WTC11 (cell line): ENCODE measurements at regions of chr17 and their contacts with region 1.

Region 1: GRCh38 chr17:19567216-19568015 is 33.8 kb downstream of the SLC47A1 start:
- DNase-seq: peak; percentile 21
- ATAC-seq: peak; percentile 82
- H3K4me3 Mint-ChIP-seq: no peak overlapping the region
- H3K27ac Mint-ChIP-seq: no peak overlapping the region
- H3K4me1 Mint-ChIP-seq: no peaks in the 10 kb centered on the region
- H3K27me3 Mint-ChIP-seq: no peaks in the 10 kb centered on the region; the same call in 1 of the 2 replicates
- CTCF ChIP-seq: no peak; the same call in 1 of the 2 replicates

Region 2: DNA sequence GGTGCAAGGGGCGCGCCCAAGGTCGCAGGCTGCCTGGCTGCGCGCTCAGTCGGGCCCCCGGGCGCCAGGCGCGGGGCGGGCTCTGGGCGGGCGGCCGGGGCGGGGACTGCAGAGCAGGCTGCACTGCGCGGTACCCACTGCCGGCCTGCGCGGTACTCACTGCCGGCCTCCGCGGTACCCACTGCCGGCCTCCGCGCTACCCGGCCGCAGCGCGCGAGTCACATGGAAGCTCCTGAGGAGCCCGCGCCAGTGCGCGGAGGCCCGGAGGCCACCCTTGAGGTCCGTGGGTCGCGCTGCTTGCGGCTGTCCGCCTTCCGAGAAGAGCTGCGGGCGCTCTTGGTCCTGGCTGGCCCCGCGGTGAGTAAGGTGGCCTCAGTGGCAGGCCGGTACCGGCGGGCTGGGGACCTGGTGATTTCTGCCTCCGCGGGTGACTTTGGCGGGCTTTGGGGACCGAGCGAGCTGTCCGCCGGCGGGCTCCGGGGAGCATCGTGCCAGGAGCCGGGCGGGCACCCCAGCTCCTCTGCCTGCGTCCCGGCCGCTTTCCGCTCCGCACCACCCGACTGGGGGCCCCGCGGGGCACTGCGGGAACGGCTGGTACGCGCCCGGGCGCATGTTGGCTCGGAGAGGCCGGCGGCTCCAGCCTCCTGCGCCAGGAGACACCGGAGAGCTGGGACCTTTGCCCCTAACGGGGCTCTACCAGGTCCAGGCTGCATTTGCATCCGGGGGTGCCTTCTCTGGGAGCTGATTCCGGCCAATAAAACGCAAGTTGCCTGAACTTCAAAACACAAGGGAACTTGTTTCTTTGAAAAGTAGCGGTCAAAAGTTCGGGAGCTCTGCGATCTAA is 33.5 kb before region 1 on chr17 and contains the start of gene SLC47A1:
- CTCF ChIA-PET with region 1: interaction called, 10 read pairs
- POLR2A ChIA-PET with region 1: no interaction called
- DNase-seq: peak; percentile 42
- ATAC-seq: peak; percentile 83
- H3K4me3 Mint-ChIP-seq: peak within 1 kb of the TSS; percentile 71
- H3K27ac Mint-ChIP-seq: no peak within 1 kb of the TSS
- H3K4me1 Mint-ChIP-seq: peaks cover 35% of the 10 kb centered on the region
- H3K27me3 Mint-ChIP-seq: peaks cover 43% of the 10 kb centered on the region
- CTCF ChIP-seq: no peak
- total RNA-seq, gene SLC47A1: 2.5 to 3.3 TPM (median 2.9 TPM) in 3 replicates

Region 3: DNA sequence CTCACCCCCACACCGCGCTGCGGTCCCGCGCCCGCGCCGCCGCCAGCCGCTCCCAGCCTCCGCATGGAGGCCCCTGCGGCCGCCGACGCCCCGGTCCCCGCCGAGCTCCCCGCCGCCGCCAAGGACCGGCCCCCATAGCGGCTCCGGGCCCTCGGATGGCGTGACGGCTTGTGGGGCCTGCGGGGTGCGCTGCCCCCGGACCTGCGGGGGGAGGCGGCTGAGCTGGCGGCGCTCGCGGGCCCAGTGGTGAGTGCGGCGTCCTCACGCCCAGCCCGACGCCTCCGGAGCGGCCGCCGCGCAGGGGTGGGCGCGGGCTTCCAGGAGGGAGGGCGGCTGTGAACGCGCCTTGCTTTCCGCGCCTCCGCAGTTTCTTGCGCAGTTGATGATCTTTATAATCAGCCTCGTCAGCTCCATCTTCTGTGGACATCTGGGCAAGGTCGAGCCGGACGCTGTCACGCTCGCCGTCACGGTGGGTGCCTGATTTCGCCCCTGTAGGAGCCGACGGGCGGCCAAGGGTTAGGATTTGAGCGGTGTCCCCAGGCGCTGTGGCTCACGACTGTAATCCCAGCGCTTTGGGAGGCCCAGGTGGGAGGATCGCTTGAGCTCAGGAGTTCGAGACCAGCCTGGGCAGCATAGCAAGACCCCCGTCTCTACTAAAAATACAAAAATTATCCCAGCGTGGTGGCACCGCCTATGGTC is 12.6 kb after region 1 on chr17:
- CTCF ChIA-PET with region 1: interaction called, 15 read pairs
- POLR2A ChIA-PET with region 1: no interaction called
- DNase-seq: peak; percentile 30
- ATAC-seq: peak; percentile 60
- H3K4me3 Mint-ChIP-seq: peak overlapping the region; percentile 78
- H3K27ac Mint-ChIP-seq: no peak overlapping the region
- H3K4me1 Mint-ChIP-seq: peaks cover 22% of the 10 kb centered on the region
- H3K27me3 Mint-ChIP-seq: peaks cover 34% of the 10 kb centered on the region
- CTCF ChIP-seq: no peak

Region 4: GRCh38 chr17:19590912-19591551 is 23.6 kb after region 1 on chr17:
- CTCF ChIA-PET with region 1: no interaction called
- POLR2A ChIA-PET with region 1: no interaction called
- DNase-seq: peak; percentile 34
- ATAC-seq: peak; percentile 83
- H3K4me3 Mint-ChIP-seq: no peak overlapping the region
- H3K27ac Mint-ChIP-seq: no peak overlapping the region
- H3K4me1 Mint-ChIP-seq: no peaks in the 10 kb centered on the region; the same call in 1 of the 2 replicates
- H3K27me3 Mint-ChIP-seq: no peaks in the 10 kb centered on the region
- CTCF ChIP-seq: no peak

Region 5: GRCh38 chr17:19672009-19672750 is 104.8 kb after region 1 on chr17:
- CTCF ChIA-PET with region 1: no interaction called
- POLR2A ChIA-PET with region 1: no interaction called
- DNase-seq: no peak
- ATAC-seq: no peak
- H3K4me3 Mint-ChIP-seq: no peak overlapping the region
- H3K27ac Mint-ChIP-seq: no peak overlapping the region
- H3K4me1 Mint-ChIP-seq: no peaks in the 10 kb centered on the region
- H3K27me3 Mint-ChIP-seq: no peaks in the 10 kb centered on the region
- CTCF ChIP-seq: no peak